GM12878 (cell line): ENCODE measurements at regions of chr12 and their contacts with region 1.

Region 1: DNA sequence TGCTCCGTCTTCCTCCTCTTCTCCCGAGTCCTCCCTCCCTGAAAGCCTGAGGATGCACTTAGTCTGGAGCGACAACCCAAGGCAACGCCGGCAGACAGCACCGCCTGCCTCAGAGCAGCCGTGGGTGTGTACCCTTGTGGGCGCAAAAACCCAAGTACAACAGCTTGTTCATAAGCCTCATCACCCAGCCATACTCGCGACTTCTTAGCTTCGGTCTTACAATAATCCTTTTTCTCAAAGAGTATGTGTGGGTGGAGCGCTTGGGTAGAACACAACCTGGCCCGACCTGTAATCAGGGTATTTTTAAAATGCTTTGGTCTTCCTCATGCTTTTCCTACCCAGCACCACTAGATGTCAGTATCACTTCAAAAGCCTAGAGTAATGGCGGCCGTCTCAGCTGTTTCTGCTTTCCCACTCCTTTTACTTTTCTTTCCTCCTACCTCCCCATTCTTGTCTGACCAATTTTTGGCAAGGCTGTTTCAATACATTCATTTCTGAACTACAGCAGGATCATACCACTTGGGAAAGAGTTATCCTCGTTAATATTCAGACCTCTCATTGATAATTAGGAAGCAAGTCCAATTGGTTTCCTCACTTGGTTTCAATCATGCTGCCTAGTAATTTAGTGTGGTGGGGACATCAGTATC is 198.9 kb downstream of the EPS8 start:
- DNase-seq: peak; percentile 46
- ATAC-seq: peak; percentile 97
- H3K4me3 ChIP-seq: peak overlapping the region; percentile 46; the same call in 1 of the 2 replicates
- H3K27ac ChIP-seq: no peak overlapping the region
- H3K4me1 ChIP-seq: peaks cover 4% of the 10 kb centered on the region; the same call in 1 of the 2 replicates
- H3K27me3 ChIP-seq: 0 out of 4 replicates have a peak, but pooled peaks cover 0 to 1% of the 10 kb centered on the region in 2 experiments
- CTCF ChIP-seq: peak; percentile 85 to 94 (median 86); a peak in 5 of 6 replicates
- EP300 ChIP-seq: no peak
- POLR2A ChIP-seq: no peak
- RAD21 ChIP-seq: peak; percentile 97

Region 2: DNA sequence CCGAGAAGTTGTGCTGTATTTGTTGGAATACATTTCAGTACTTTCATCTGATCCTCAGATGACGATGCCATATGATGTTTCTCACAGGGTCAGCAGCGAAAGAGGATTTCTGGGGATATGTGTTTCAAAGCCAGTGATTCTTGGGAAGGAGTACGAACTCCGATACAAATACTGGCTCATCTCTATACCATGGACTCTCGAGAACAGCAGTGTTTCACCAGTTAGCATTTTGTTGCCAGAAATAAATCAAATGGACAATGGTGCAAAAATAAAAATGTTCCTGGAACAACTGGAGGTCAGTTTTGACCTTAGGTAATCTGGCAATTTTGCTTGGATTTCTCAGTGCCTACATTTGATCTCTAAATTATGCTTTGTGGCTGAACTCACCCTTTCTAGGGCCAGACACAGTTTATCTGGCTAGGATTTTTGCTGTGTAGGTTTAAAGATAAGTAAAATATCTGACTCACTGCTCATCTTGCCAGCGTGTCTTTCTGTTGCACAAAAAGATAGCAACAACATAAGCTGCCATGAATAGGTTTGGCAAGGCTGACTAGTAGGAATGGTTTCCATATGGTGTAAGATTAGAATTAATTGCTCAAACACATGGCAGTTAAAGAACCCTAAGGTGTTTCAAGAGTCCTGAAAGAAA is 693.7 kb before region 1 on chr12:
- CTCF ChIA-PET with region 1: no interaction called
- POLR2A ChIA-PET with region 1: no interaction called
- RAD21 ChIA-PET with region 1: no interaction called
- SMC1A ChIA-PET with region 1: no interaction called
- in situ Hi-C with region 1: no loop called
- intact Hi-C with region 1: no loop called
- DNase-seq: no peak
- ATAC-seq: no peak
- H3K4me3 ChIP-seq: no peak overlapping the region
- H3K27ac ChIP-seq: no peak overlapping the region
- H3K4me1 ChIP-seq: no peaks in the 10 kb centered on the region
- H3K27me3 ChIP-seq: no peaks in the 10 kb centered on the region; a peak in 1 of 4 replicates
- CTCF ChIP-seq: no peak
- EP300 ChIP-seq: no peak
- POLR2A ChIP-seq: no peak
- RAD21 ChIP-seq: no peak

Region 3: DNA sequence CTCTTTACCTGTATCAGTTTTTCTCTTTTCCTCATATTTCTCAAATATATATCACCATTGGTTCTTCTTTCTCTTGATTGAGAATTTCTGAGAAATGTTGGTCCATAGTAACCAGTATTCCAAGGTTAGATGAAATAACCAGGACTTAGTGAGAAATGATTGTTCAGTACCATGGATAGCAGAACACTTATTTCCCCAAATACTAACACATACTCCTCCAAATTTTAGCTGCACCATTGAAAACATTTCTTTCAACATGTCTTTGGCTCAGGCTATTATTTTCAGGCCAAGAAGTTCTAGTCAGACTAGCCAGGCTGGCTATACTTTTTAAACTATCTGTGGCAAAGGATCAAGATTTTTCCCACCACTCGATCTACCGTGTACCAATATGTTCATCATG is 154.7 kb before region 1 on chr12:
- CTCF ChIA-PET with region 1: no interaction called
- POLR2A ChIA-PET with region 1: no interaction called
- RAD21 ChIA-PET with region 1: no interaction called
- SMC1A ChIA-PET with region 1: no interaction called
- in situ Hi-C with region 1: no loop called
- intact Hi-C with region 1: no loop called
- DNase-seq: no peak
- ATAC-seq: no peak
- H3K4me3 ChIP-seq: no peak overlapping the region
- H3K27ac ChIP-seq: no peak overlapping the region
- H3K4me1 ChIP-seq: no peaks in the 10 kb centered on the region
- H3K27me3 ChIP-seq: no peaks in the 10 kb centered on the region
- CTCF ChIP-seq: no peak
- EP300 ChIP-seq: no peak
- POLR2A ChIP-seq: no peak
- RAD21 ChIP-seq: no peak

Region 4: DNA sequence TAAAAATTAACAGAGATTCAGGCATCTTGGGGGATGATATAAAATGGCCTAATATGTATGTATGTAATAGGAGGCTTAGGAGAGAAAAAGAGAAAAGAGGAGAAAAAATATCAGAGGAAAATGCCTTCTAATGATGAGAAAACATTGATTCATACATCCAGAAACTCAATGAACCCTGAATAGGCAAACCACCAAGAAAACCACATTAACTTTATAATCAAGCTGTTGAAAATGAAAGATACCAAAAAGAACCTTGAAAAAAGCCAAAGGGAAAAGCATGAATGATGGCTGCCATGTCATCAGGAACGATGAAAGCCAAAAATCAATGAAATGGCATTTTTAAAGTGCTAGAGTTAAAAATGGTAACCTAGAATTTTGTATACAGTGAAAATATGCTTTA is 18.6 kb after region 1 on chr12:
- CTCF ChIA-PET with region 1: interaction called, 8 read pairs
- POLR2A ChIA-PET with region 1: no interaction called
- RAD21 ChIA-PET with region 1: interaction called, 6 read pairs
- SMC1A ChIA-PET with region 1: interaction called, 16 read pairs
- in situ Hi-C with region 1: no loop called
- intact Hi-C with region 1: no loop called
- DNase-seq: no peak
- ATAC-seq: no peak
- H3K4me3 ChIP-seq: no peak overlapping the region
- H3K27ac ChIP-seq: no peak overlapping the region
- H3K4me1 ChIP-seq: no peaks in the 10 kb centered on the region
- H3K27me3 ChIP-seq: no peaks in the 10 kb centered on the region
- CTCF ChIP-seq: no peak
- EP300 ChIP-seq: no peak
- POLR2A ChIP-seq: no peak
- RAD21 ChIP-seq: no peak

Region 5: GRCh38 chr12:15863984-15864383 is 273.7 kb after region 1 on chr12:
- CTCF ChIA-PET with region 1: interaction called, 478 read pairs
- POLR2A ChIA-PET with region 1: no interaction called
- RAD21 ChIA-PET with region 1: interaction called, 215 read pairs
- SMC1A ChIA-PET with region 1: interaction called, 466 read pairs
- in situ Hi-C with region 1: no loop called
- intact Hi-C with region 1: no loop called
- DNase-seq: peak; percentile 67
- ATAC-seq: peak; percentile 94
- H3K4me3 ChIP-seq: no peak overlapping the region
- H3K27ac ChIP-seq: no peak overlapping the region
- H3K4me1 ChIP-seq: no peaks in the 10 kb centered on the region
- H3K27me3 ChIP-seq: no peaks in the 10 kb centered on the region
- CTCF ChIP-seq: no peak
- EP300 ChIP-seq: no peak
- POLR2A ChIP-seq: no peak
- RAD21 ChIP-seq: no peak